ENCODE measurements at regions of chr12 and their contacts with region 1.

Region 1: DNA sequence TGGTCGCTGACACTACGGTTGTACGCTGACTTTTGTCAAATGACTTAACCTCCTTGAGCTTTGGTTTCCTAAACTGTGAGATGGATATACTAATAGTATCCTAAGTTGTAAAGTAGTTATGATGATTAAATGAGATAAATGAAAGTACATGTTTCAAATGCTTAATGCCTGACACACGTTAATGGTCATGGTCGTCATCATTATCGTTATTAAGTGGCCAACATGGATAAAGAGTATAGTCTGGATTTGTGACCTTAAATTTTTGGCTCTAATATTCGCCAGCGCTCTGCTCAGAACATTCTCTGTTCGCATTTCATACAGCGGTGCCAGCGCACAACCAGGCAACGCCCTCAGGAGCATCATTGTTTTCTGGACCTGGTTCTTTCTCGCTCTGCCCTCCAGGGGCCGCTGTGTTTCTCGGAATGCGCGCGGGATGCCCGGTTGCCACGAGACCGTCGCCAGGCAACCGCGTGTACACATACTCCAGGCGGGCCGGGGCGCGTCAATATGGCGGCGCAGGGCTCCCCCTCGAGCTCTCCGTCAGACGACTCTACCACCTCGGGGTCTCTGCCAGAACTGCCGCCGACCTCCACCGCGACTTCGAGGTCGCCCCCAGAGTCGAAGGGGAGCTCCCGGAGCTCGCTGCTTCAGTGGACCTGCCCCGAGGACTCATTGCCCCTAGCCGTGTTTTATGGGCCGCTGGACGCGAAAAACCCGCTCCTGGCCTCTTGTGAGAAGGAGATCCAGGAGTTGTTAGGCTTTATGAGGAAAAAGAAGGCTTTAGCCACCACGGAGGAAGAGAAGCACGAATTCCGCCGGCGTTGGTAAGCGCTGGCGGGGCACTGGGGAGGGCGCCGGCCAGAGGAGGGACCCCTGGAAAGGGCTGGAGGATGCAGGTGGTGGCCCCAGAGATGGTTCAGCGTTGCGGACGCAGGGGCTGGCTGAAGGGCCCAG is at the start of gene CFAP54:
- DNase-seq: peak; percentile 89
- ATAC-seq: peak; percentile 89
- H3K4me3 ChIP-seq: peak within 1 kb of the TSS; percentile 88
- H3K27ac ChIP-seq: peak within 1 kb of the TSS; percentile 28
- H3K4me1 ChIP-seq: peaks cover 4% of the 10 kb centered on the region
- H3K27me3 ChIP-seq: no peaks in the 10 kb centered on the region
- CTCF ChIP-seq: peak; percentile 96
- POLR2A ChIP-seq: peak; percentile 77
- RAD21 ChIP-seq: peak; percentile 70
- total RNA-seq, gene CFAP54: 0.18 and 0.28 TPM in 2 replicates

Region 2: DNA sequence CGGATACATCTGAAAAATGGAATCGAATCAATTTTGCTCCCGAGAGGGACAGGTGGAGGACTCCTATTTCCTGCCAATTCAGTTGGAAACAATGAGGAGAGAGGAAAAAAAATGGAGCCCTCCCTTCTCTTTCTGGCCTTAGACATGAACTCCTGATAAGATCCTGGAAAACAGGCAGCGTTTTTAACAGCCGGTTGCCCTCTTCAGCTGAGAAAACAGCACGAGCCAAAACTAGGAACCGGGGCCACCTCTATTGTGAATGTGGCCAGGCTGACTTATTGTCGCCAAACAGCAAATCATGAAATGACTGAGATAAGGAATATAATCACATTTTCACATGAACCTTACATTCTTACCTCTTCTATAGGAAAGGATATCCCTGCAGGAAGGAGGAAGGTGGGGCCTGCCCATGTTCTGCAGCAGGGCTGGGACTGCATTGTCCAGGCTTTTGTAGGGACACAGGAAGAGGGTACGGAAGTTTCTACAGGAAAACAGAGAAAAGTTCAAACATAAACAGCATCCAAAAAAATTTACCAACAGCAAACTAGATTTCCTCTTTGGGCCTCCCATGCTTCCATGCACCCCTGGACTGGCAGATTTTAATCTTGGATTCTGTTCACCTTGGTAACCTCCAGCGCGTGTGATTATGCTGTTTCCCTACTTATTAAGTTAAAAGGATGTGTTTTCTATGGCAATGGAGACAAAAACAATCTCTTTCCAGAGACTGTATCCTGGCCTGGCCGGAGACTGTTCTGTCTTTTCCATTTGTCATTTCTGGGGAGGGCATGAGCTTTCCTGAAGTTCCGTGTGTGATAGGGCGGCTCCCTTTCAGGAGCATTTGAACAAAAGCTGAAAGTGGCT is 324.2 kb before region 1 on chr12:
- CTCF ChIA-PET with region 1: no interaction called
- POLR2A ChIA-PET with region 1: no interaction called
- dilution Hi-C with region 1: no loop called
- in situ Hi-C with region 1: no loop called
- intact Hi-C with region 1: no loop called
- DNase-seq: no peak
- ATAC-seq: no peak
- H3K4me3 ChIP-seq: no peak overlapping the region
- H3K27ac ChIP-seq: no peak overlapping the region
- H3K4me1 ChIP-seq: no peaks in the 10 kb centered on the region
- H3K27me3 ChIP-seq: peaks cover 4% of the 10 kb centered on the region; the same call in 1 of the 2 replicates
- CTCF ChIP-seq: no peak
- POLR2A ChIP-seq: no peak
- RAD21 ChIP-seq: no peak

Region 3: GRCh38 chr12:96294831-96295230 is 194.5 kb before region 1 on chr12:
- CTCF ChIA-PET with region 1: no interaction called
- POLR2A ChIA-PET with region 1: no interaction called
- dilution Hi-C with region 1: no loop called
- in situ Hi-C with region 1: no loop called
- intact Hi-C with region 1: loop called (anchors 10 kb)
- DNase-seq: peak; percentile 53
- ATAC-seq: no peak
- H3K4me3 ChIP-seq: no peak overlapping the region
- H3K27ac ChIP-seq: no peak overlapping the region; the same call in 1 of the 2 replicates
- H3K4me1 ChIP-seq: 0 out of 2 replicates have a peak, but pooled peaks cover 2% of the 10 kb centered on the region
- H3K27me3 ChIP-seq: no peaks in the 10 kb centered on the region
- CTCF ChIP-seq: no peak
- POLR2A ChIP-seq: no peak
- RAD21 ChIP-seq: no peak

Region 4: DNA sequence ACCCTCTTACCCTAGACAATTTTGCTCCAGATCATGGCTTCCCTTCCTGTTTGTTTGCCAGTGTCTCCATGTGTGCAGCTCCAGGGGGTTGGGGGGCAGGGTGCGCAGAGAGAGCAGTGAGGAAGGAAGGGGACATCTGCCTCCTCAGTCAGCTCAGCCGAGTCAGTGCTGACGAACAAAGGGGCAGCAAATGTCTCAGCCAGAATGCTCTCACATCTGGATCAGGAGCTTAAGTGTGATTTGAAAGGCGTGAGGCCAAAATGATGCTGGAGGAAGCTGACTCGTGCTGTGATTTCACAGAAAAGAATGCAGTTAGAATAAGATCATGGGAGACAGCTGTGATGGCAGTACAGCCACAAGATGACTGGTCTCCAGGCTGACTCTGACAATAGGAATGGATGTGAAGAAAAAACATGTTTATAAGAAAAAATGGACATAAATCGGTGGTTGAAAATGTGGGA is 62.1 kb before region 1 on chr12:
- CTCF ChIA-PET with region 1: interaction called, 3 read pairs
- POLR2A ChIA-PET with region 1: no interaction called
- dilution Hi-C with region 1: no loop called
- in situ Hi-C with region 1: no loop called
- intact Hi-C with region 1: loop called (anchors 1 kb)
- DNase-seq: peak; percentile 100
- ATAC-seq: peak; percentile 88
- H3K4me3 ChIP-seq: peak overlapping the region; percentile 46
- H3K27ac ChIP-seq: peak overlapping the region; percentile 99
- H3K4me1 ChIP-seq: peaks cover 22% of the 10 kb centered on the region
- H3K27me3 ChIP-seq: no peaks in the 10 kb centered on the region
- CTCF ChIP-seq: no peak
- POLR2A ChIP-seq: peak; percentile 88
- RAD21 ChIP-seq: peak; percentile 39; the same call in 1 of the 2 replicates